ENCODE measurements at regions of chr4 and their contacts with region 1.

Region 1: DNA sequence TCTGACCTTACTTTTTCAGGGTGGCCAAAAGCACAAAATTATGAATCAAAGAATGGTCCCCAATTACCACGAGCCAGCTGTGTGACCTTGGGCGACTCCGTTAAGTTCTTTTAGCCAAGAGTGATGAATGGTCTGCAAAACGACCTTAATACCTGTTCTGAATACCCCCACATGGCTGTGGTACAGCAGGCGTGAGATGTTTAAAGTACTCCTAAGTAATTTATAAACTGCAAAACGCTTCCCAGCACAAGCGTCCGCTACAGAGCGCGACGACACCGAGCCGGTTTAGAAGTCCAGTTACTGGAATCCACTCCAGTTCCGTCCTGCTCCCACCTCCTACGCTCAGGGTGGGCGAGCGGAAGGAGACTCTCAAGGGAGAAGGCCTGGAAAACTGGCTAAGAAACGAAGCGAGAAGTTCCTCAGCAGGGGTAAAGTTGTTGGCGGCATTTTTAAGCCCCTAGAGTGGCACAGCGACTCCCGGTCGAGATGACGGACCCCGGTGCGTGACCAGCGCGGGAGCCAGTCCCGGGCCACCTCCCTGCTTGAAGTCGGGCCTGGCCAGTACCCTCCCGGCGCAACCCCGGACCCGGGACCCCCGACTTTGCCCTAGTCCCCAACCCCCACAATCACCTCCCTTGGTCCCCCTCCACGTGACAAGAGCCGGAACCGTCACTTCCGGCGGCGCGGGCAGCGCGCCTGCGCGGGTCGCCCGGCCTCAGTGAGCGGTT is 683 bp upstream of the BMP2K start:
- DNase-seq: peak; percentile 83 to 84
- H3K4me3 ChIP-seq: peak overlapping the region; percentile 75 to 88 (median 86)
- H3K27ac ChIP-seq: peak overlapping the region; percentile 99
- H3K4me1 ChIP-seq: no peaks in the 10 kb centered on the region
- H3K27me3 ChIP-seq: no peaks in the 10 kb centered on the region
- CTCF ChIP-seq: no peak
- POLR2A ChIP-seq: peak; percentile 21

Region 2: DNA sequence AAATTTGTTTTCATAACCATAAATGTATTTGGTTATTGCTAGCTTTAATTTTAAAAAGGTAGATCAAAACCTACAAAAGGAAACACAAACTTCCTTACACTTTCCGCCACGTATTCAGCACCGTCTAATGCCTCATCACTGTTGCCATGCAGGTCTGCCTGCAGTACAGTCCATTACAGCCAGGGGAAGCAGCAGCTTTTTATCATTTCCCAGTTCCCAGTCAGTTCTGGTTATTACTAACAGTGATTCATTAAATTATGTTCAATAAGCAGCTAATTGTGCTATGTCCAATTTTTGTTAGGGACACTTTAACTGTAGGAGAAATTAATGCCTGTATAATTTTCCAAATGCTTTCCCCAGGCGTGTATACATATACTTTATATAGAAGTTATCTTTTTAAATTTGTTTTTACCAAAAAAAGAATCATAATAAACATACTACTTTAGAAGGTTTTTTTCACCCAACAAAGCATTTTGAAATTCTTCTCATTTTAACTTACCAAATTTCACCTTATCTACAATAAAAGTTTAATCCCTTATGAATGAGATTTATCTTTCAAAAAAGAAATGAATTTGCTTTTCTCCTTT is 130.6 kb before region 1 on chr4:
- intact Hi-C with region 1: loop called (anchors 10 kb)
- DNase-seq: peak in 1 of 2 donors; percentile 67
- H3K4me3 ChIP-seq: no peak overlapping the region
- H3K27ac ChIP-seq: peak overlapping the region; percentile 88 to 90
- H3K4me1 ChIP-seq: peaks cover 5 to 7% of the 10 kb centered on the region in 2 donors
- H3K27me3 ChIP-seq: no peaks in the 10 kb centered on the region
- CTCF ChIP-seq: peak; percentile 91 to 95 (median 94)
- POLR2A ChIP-seq: no peak

Region 3: GRCh38 chr4:78818530-78819079 is 43.1 kb after region 1 on chr4:
- intact Hi-C with region 1: loop called (anchors 2 kb)
- DNase-seq: no peak
- H3K4me3 ChIP-seq: no peak overlapping the region
- H3K27ac ChIP-seq: no peak overlapping the region
- H3K4me1 ChIP-seq: no peaks in the 10 kb centered on the region
- H3K27me3 ChIP-seq: no peaks in the 10 kb centered on the region
- CTCF ChIP-seq: no peak
- POLR2A ChIP-seq: no peak